ENCODE measurements at regions of chr4 and their contacts with region 1.

Region 1: GRCh38 chr4:127965062-127965802 is at the starts of genes ABHD18 and MFSD8:
- H3K4me3 Mint-ChIP-seq: peak within 1 kb of the TSS; percentile 96
- H3K27ac Mint-ChIP-seq: peak within 1 kb of the TSS; percentile 97
- H3K4me1 Mint-ChIP-seq: peaks cover 19% of the 10 kb centered on the region
- H3K27me3 Mint-ChIP-seq: no peaks in the 10 kb centered on the region

Region 2: GRCh38 chr4:127622921-127623656 is 342.1 kb before region 1 on chr4:
- intact Hi-C with region 1: loop called (anchors 10 kb)
- H3K4me3 Mint-ChIP-seq: peak overlapping the region; percentile 72
- H3K27ac Mint-ChIP-seq: no peak overlapping the region
- H3K4me1 Mint-ChIP-seq: peaks cover 17% of the 10 kb centered on the region
- H3K27me3 Mint-ChIP-seq: peaks cover 49% of the 10 kb centered on the region

Region 3: DNA sequence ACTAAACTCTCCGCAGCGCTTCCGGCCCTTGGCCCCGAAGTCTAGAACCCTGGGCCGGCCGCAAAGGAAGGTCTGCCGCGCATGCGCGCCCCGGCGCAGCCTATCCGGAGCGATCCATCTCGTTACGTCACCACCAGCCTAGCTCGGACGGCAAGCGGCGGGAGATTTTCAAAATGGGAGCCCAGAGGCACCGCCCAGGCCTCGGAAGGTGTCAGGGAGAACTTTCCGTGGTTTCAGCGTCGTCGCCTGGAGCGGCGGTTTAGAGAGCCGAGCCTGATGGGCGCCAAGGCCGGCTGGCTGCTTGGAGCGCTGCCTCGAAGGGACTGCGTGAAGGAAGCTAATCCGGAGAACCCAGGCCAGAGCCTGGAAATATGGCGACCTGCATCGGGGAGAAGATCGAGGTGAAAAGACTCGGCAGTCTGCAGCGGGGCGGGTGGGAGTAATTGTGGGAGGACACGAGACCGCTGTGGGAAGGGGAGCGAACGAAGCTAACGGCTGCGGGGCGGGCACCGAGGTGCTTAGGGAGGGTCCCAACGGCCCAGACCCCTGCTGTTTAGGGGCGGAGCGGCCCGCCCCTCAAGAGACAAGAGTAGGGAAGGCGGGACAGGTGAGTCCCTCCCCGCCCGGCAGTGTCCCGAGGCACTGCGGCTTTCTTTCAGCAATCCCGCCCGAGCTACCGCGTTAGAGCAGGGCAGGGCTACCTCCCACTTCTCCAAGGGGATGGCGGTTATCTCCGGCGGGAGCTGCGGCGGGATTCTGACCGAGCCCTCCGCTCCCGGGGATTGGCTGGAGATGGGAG is 84.3 kb before region 1 on chr4 and contains the start of gene PLK4:
- intact Hi-C with region 1: loop called (anchors 1 kb)
- H3K4me3 Mint-ChIP-seq: peak within 1 kb of the TSS; percentile 95
- H3K27ac Mint-ChIP-seq: peak within 1 kb of the TSS; percentile 91
- H3K4me1 Mint-ChIP-seq: peaks cover 12% of the 10 kb centered on the region
- H3K27me3 Mint-ChIP-seq: no peaks in the 10 kb centered on the region

Region 4: DNA sequence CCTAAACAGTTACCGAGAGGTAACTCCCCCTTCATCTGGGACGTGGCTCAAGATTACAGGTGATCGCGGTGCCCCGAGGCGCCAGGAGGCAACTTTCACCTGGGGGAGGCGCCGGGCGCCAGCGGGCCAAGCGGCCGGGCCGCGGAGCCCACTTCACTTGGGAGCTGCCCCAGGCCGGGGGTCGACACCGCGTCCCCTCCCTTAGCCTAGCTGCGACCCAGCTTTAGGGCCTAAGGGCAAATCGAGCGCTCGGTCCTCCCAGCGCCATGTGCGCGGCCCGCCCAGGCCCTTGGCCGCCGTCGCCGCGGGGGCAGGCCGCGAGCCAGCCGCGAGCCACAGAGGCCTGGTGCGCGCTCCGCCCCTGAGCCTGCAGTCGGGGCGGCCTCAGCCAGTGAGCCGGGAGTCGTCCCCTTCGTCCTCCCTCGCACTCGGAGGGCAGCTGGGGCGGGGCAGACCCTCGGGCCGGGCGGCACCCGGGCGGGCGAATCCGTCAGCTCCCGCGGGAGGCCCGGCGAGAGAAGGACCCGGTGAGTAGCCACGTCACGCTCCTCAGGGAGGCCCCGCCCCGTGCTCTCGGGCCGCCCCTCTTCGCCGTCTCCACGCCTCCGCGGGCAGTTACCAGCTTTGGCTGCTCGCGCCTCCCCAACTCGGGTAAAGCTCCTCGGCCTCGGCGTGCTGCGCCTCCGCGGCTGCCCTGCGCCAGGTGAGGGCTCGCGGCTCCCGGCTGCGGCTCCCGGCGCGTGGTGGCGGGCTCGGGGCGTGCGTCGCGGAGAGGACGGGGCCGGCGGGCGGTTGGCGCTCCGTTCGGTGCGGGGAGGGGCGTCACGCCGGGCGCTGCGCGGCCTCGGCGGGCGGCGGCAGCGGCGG is 95.7 kb after region 1 on chr4 and contains the start of gene LARP1B:
- intact Hi-C with region 1: loop called (anchors 1 kb)
- H3K4me3 Mint-ChIP-seq: peak within 1 kb of the TSS; percentile 78
- H3K27ac Mint-ChIP-seq: peak within 1 kb of the TSS; percentile 87
- H3K4me1 Mint-ChIP-seq: peaks cover 10% of the 10 kb centered on the region
- H3K27me3 Mint-ChIP-seq: peaks cover 2% of the 10 kb centered on the region